ENCODE measurements at regions of chr1 and their contacts with region 1.

Region 1: GRCh38 chr1:32981003-32981901 is 16.6 kb upstream of the RNF19B start:
- DNase-seq: peak; percentile 58
- H3K4me3 Mint-ChIP-seq: peak overlapping the region; percentile 47
- H3K27ac Mint-ChIP-seq: peak overlapping the region; percentile 87
- H3K4me1 Mint-ChIP-seq: peaks cover 63% of the 10 kb centered on the region
- H3K27me3 Mint-ChIP-seq: no peaks in the 10 kb centered on the region

Region 2: DNA sequence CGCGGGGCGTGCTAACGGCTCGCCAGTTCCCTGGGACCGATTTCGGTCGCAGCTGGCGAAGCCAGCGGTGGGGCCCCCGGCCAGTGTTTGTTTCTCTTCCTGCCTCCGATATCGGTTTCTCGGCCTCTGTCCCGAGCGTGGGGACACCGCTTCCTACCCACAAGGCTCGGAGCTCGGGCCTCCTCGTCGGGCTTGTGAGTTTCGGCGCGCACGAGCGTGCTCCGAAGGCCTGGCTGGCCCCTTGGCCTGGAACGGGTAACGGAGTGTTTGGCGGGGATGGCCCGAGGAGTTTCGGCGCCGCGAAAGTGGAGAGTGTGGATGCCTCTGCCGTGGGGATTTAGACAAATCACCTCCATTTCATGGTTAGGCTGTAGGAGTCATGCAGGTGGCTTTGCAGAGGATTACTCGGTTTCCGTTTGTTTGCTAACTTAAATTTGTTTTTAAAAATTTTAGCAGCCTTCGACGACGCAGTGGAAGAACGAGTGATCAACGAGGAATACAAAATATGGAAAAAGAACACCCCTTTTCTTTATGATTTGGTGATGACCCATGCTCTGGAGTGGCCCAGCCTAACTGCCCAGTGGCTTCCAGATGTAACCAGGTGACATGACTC is 329.7 kb before region 1 on chr1:
- intact Hi-C with region 1: no loop called
- DNase-seq: no peak
- H3K4me3 Mint-ChIP-seq: peak overlapping the region; percentile 93
- H3K27ac Mint-ChIP-seq: peak overlapping the region; percentile 100
- H3K4me1 Mint-ChIP-seq: peaks cover 38% of the 10 kb centered on the region
- H3K27me3 Mint-ChIP-seq: no peaks in the 10 kb centered on the region

Region 3: DNA sequence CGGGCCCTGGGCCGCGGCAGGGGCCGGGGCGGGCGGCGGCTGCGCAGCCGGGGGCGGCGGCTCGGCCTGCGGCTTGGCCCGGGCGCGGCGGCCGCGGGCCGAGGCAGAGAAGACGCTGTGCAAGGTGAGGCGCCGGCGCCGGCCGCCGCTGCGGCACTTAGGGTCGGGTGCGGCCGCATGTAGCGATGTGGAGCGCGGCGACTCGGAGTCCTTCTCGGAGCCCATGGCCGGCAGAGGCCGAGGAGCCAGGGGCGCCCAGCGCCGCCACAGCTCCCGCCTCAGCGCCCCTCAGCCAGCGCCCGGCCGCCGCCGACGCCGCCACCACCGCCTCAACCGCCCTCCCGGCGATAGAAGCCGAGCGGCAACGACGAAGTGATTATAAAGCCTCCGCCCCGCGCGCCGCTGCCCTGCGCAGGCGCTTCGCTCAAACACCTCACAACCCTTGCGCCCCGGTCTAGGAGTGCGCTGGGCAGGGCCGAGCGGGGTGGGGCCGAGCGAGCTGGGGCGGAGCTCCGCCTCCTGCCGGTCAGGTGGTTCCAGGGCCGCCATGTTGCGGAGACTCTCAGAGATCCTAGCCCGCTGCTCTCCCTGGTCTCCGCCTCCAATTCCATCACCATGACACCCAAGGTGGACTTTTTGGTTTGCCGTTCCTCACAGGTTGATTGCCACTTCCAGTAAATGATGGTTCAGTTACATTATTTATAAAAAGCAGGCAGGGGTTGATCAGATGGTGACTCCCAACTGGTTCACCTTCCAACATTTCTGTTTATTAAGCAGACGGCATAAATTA is 16.6 kb before region 1 on chr1 and contains the start of gene RNF19B:
- intact Hi-C with region 1: loop called (anchors 1 kb)
- DNase-seq: peak; percentile 94
- H3K4me3 Mint-ChIP-seq: peak within 1 kb of the TSS; percentile 91
- H3K27ac Mint-ChIP-seq: peak within 1 kb of the TSS; percentile 74
- H3K4me1 Mint-ChIP-seq: peaks cover 49% of the 10 kb centered on the region
- H3K27me3 Mint-ChIP-seq: no peaks in the 10 kb centered on the region
- total RNA-seq, gene RNF19B: 50.4 and 52.5 TPM in 2 replicates

Region 4: DNA sequence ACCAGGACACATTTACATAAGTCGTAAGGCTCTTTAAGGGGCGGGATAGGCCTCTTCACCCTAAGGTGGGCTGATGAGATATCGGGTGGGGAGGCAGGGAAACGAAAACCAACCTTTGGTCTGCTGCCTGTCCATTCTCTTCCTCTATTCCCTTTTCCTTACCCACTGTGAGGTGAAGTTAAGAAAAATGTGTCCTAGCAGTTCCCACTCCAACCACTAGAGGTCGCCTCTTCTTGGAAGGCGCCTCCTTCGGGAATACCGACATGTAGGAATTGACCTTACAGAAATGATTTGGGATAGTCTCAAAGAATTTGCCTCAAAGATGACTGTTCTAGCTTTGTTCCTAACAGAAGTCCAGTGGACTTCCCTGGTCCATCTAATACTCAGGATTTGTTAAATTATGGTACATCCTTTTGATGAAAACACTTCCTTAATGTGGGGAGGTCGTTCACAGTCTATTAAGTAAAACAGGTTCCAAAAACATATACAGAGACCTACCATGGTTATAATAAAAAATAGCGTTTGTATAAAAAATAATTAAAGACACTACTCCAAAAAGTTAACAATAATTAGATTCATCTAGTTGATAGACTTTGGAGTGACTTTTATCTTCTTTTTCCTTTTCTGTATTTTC is 113.8 kb after region 1 on chr1:
- intact Hi-C with region 1: loop called (anchors 5 kb)
- DNase-seq: no peak
- H3K4me3 Mint-ChIP-seq: no peak overlapping the region
- H3K27ac Mint-ChIP-seq: no peak overlapping the region
- H3K4me1 Mint-ChIP-seq: peaks cover 45% of the 10 kb centered on the region
- H3K27me3 Mint-ChIP-seq: no peaks in the 10 kb centered on the region

Region 5: GRCh38 chr1:33392639-33393038 is 411.4 kb after region 1 on chr1:
- intact Hi-C with region 1: no loop called
- DNase-seq: no peak
- H3K4me3 Mint-ChIP-seq: no peak overlapping the region
- H3K27ac Mint-ChIP-seq: no peak overlapping the region
- H3K4me1 Mint-ChIP-seq: peaks cover 8% of the 10 kb centered on the region
- H3K27me3 Mint-ChIP-seq: peaks cover 33% of the 10 kb centered on the region

Measured in activated T-helper 2 cell treated with anti-CD3 and anti-CD28 coated beads, Interferon-gamma antibody, Interleukin-2, Interleukin-4, amounts not matched to agents 10 μg/mL and 5 μg/mL and 100 μg/mL, durations not matched to agents 14 hours and 24 hours and 36 hours (primary cell).